Head of caudate nucleus (tissue), 42 donors: ENCODE measurements at regions of chr3 and their contacts with region 1.

Region 1: GRCh38 chr3:146189519-146190173 is 28.7 kb upstream of the PLOD2 start:
- DNase-seq: peak in 19 of 42 donors; percentile 2 to 54 (median 17)

Region 2: GRCh38 chr3:146072824-146073223 is 116.8 kb before region 1 on chr3:
- intact Hi-C with region 1: loop called (anchors 5 kb)
- DNase-seq: no peak